ENCODE measurements at regions of chr20 and their contacts with region 1.

Region 1: DNA sequence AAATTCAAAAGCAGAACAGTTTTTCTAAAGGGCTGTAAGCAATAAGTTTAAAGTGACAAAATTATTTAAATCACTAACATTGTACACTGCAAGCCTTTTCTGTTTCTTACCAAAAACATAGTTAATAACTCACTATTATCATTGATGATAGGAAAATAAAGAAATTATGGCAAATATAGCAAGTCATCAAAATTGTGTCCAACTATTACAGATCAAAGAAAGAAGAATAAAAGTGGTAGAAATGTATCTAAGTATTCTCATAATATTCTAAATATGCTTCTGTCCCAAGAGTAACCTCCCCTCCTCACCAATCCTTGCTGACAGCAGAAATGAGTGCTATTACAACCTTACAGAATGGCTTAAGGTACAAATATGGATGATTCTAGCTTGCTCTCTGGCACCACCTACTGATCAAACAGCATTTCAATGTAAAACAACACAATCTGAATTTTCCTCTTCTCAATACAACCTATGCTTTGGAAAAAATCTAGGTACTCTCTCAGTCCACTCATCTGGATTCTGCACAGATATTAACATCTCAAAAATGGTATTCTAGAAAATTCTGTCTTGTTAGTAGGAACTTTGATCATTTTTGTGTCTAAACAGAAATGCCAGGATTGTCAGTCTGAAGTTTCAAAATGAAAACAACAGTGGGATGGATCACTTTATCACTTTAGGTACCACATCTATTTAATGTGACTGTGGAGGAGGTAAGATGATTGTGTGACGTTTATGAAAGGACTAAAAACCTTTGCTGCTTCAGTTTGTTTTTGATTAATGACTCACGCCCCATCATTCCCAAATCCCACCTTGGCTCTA is 40.9 kb downstream of the ZFP64 start:
- DNase-seq: peak; percentile 65
- CTCF ChIP-seq: peak; percentile 76

Region 2: GRCh38 chr20:52139986-52140385 is 10.7 kb before region 1 on chr20:
- CTCF ChIA-PET with region 1: interaction called, 17 read pairs
- POLR2A ChIA-PET with region 1: no interaction called
- DNase-seq: no peak
- CTCF ChIP-seq: no peak